ENCODE measurements at regions of chr11 and their contacts with region 1.

Region 1: DNA sequence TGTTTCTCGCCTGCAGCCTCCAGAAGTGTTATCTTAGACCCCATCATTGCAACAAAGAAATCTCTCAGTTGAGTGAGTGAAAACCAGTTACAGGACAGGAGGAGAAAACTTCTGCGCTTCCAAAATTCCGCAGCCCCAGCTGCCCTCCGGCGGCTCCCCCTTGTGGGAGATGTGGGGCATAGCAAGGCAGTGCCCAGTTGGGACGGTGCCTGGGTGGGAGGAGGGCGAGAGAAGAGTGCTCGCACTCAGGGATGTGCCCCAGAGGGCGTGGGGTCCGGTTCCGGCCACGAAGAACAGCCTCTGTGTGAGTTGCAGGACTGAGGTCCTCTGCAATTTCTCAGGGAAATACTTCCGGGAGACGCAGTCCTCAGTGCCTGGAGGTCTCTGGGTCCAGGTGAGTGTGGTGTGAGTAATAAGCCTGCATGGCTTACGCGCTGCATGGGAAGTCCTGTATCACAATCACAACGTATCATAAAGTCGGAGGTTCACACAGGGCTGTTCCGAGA is 87.0 kb upstream of the BLID start:
- DNase-seq: peak; percentile 25 to 49
- ATAC-seq: peak; percentile 83

Region 2: GRCh38 chr11:122101625-122102291 is 101.2 kb before region 1 on chr11:
- intact Hi-C with region 1: loop called in 1 of 2 experiments (anchors 5 kb)
- DNase-seq: peak; percentile 21 to 40
- ATAC-seq: no peak

Region 3: GRCh38 chr11:122317305-122317704 is 114.3 kb after region 1 on chr11:
- intact Hi-C with region 1: no loop called
- DNase-seq: no peak
- ATAC-seq: no peak

Region 4: DNA sequence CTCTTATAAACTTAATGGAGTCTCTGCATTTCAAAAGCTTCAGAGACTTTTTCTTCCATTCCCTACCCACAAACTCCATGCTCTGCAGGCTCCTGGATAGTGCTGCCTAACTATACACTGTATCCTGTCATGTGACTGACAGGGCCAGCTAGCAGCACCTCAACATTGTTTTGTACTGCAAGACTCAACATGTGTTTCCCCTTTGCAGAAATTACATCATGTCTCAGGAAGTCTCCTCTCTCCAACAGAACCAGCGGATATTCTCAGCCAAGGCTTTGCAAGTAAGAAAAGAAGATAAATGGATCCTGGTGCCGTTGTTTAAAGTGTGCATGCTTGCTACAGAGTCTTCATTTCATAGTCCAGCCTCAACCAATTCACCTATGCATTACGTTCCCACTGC is 288.5 kb after region 1 on chr11:
- intact Hi-C with region 1: no loop called
- DNase-seq: no peak
- ATAC-seq: no peak

Measured in left colon (tissue), 2 donors.